ENCODE measurements at regions of chr11 and their contacts with region 1.

Region 1: GRCh38 chr11:76919887-76920746 is 59.4 kb downstream of the ACER3 start:
- DNase-seq: peak; percentile 72
- H3K4me3 Mint-ChIP-seq: no peak overlapping the region
- H3K27ac Mint-ChIP-seq: no peak overlapping the region
- H3K4me1 Mint-ChIP-seq: peaks cover 5% of the 10 kb centered on the region
- H3K27me3 Mint-ChIP-seq: no peaks in the 10 kb centered on the region

Region 2: DNA sequence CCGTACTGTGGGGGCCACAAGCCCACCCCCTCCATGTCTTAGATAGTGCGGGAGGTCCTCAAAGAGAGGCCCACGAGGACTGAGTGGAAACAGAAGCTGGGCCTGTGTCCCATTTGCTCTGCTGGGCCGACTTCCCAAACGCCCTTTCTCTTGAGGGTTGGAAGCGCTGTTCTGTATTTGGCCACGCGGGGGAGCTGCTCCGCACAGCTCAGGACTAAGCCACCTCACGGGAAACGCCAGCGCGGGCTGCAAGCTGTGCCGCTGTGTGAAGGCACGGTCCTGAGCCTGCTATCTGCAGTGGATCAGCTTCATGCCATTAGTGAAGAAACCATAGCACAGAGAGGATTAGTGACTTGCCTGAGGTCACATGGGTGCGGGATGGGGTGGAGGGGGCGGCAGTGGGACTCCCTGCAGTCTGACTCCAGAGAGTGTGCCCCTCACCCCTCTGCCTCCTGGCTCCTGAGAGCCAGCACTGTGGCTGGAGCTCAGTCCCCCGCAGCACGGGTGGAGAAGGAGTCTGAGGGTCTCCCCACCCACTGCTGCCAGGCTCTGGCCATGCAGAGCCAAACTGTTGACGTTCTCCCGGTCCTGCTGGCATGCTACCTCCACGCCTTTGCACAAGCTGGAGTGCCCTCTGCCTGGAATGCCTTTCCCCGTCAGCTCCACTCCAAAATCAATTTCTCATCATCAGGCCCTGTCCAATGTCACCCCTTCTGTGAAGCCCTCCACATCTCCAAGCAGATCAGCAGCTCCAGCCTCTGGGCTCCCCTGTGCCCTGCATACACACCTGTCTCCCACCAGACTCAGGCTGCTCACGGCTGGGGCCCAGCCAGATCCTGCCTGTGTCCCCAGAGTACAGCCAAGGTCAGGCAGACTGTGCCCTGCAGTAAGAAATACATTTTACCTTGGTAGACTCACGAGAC is 198.1 kb before region 1 on chr11:
- CTCF ChIA-PET with region 1: interaction called, 17 read pairs
- DNase-seq: peak; percentile 83
- H3K4me3 Mint-ChIP-seq: no peak overlapping the region
- H3K27ac Mint-ChIP-seq: no peak overlapping the region
- H3K4me1 Mint-ChIP-seq: peaks cover 3% of the 10 kb centered on the region
- H3K27me3 Mint-ChIP-seq: peaks cover 42% of the 10 kb centered on the region

Region 3: GRCh38 chr11:76799066-76799804 is 120.9 kb before region 1 on chr11:
- CTCF ChIA-PET with region 1: interaction called, 87 read pairs
- DNase-seq: peak; percentile 83
- H3K4me3 Mint-ChIP-seq: peak overlapping the region; percentile 18
- H3K27ac Mint-ChIP-seq: no peak overlapping the region
- H3K4me1 Mint-ChIP-seq: peaks cover 25% of the 10 kb centered on the region
- H3K27me3 Mint-ChIP-seq: peaks cover 49% of the 10 kb centered on the region

Region 4: DNA sequence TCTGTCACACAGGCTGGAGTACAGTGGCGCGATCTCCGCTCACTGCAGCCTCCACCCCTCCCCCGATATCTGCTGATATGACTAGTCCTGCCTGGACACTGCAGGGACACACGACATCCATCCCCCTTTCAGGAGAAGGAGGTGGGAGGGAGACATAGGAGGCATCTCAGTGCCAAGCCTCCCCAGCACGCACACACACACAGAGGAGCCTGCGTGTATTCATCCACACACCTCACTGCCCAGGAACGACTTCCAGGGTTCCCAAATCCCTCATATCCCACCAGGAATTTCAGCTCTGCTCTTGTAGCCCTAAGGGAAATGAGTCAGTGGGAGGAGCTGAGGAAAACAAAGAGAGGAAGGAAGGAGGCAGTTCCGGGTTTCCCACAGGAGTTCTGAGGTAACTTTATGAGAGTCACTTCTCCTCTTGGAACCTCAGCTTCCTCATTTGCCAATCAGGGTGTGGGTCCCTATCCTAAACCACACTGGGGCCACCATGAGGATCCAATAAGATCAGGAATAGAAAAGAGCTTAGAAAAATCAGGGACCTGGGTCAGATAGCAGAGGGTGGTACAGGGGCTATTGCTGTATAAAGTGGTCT is 96.5 kb before region 1 on chr11:
- CTCF ChIA-PET with region 1: interaction called, 10 read pairs
- DNase-seq: no peak
- H3K4me3 Mint-ChIP-seq: no peak overlapping the region
- H3K27ac Mint-ChIP-seq: no peak overlapping the region
- H3K4me1 Mint-ChIP-seq: peaks cover 32% of the 10 kb centered on the region
- H3K27me3 Mint-ChIP-seq: peaks cover 27% of the 10 kb centered on the region

Region 5: GRCh38 chr11:77047007-77047927 is 127.2 kb after region 1 on chr11:
- CTCF ChIA-PET with region 1: interaction called, 43 read pairs
- DNase-seq: peak; percentile 86
- H3K4me3 Mint-ChIP-seq: peak overlapping the region; percentile 48
- H3K27ac Mint-ChIP-seq: peak overlapping the region; percentile 30
- H3K4me1 Mint-ChIP-seq: peaks cover 16% of the 10 kb centered on the region
- H3K27me3 Mint-ChIP-seq: peaks cover 22% of the 10 kb centered on the region

Region 6: GRCh38 chr11:77082838-77083562 is 162.9 kb after region 1 on chr11:
- CTCF ChIA-PET with region 1: interaction called, 11 read pairs
- DNase-seq: peak; percentile 81
- H3K4me3 Mint-ChIP-seq: peak overlapping the region; percentile 71
- H3K27ac Mint-ChIP-seq: peak overlapping the region; percentile 98
- H3K4me1 Mint-ChIP-seq: peaks cover 26% of the 10 kb centered on the region
- H3K27me3 Mint-ChIP-seq: peaks cover 10% of the 10 kb centered on the region